Activated CD8-positive, alpha-beta memory T cell treated with anti-CD3 and anti-CD28 coated beads, Interleukin-2, amount 10 ng/mL, durations not matched to agents 7 days and 5 days (primary cell): ENCODE measurements at regions of chr5 and their contacts with region 1.

Region 1: DNA sequence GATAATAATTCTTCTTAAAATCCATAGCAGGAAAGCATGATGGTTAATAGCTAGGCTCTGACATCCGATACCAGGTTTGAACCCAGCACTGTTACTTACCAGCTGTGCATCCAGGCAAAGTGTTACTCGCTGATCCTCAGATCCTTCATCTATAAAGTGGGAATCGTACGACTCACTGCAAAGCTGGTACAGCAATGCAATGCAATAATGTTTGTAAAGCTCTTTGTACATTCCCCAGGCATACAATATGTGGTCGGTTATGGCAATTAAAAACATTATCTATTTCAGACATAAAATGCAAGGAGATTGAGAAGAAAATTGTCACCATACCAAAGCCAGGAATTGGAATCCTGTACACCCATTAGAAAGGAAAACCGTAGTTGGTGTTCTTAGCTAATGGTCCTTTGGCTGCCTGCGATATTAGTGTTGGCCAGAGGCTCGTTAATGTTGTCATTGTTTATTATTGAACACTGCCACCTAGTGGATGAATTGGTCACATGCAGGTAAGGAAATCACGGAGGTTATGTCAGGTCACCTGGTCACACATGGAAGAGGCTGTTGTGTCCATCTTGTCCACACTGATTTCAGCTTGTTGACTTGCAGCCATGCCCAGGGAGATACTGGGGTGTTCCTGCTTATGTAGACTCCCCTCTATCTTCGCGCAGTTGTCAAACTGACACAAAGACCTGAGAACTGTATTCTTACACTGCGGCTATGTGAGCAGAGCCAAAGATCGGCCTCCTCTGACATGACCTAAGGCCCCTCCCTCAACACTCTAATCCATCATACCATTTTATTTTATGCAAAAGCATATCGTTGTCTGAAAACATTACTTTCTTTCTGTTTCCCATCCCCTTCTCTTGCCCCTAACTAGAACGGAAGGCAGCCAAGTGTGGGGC is 87.5 kb upstream of the PPP2R2B start:
- DNase-seq: peak; percentile 60
- ATAC-seq: peak; percentile 83
- H3K4me3 Mint-ChIP-seq: no peak overlapping the region
- H3K27ac Mint-ChIP-seq: no peak overlapping the region
- H3K4me1 Mint-ChIP-seq: no peaks in the 10 kb centered on the region
- H3K27me3 Mint-ChIP-seq: peaks cover 2% of the 10 kb centered on the region

Region 2: GRCh38 chr5:146533260-146533857 is 432.7 kb before region 1 on chr5:
- CTCF ChIA-PET with region 1: interaction called, 85 read pairs
- DNase-seq: peak; percentile 86
- ATAC-seq: peak; percentile 91
- H3K4me3 Mint-ChIP-seq: no peak overlapping the region
- H3K27ac Mint-ChIP-seq: no peak overlapping the region
- H3K4me1 Mint-ChIP-seq: peaks cover 14% of the 10 kb centered on the region
- H3K27me3 Mint-ChIP-seq: peaks cover 3% of the 10 kb centered on the region

Region 3: GRCh38 chr5:146541958-146542849 is 423.8 kb before region 1 on chr5:
- CTCF ChIA-PET with region 1: interaction called, 73 read pairs
- DNase-seq: peak; percentile 79
- ATAC-seq: peak; percentile 94
- H3K4me3 Mint-ChIP-seq: no peak overlapping the region
- H3K27ac Mint-ChIP-seq: no peak overlapping the region
- H3K4me1 Mint-ChIP-seq: peaks cover 3% of the 10 kb centered on the region
- H3K27me3 Mint-ChIP-seq: peaks cover 5% of the 10 kb centered on the region

Region 4: GRCh38 chr5:146565764-146566367 is 400.1 kb before region 1 on chr5:
- CTCF ChIA-PET with region 1: interaction called, 34 read pairs
- DNase-seq: peak; percentile 73
- ATAC-seq: peak; percentile 99
- H3K4me3 Mint-ChIP-seq: no peak overlapping the region
- H3K27ac Mint-ChIP-seq: no peak overlapping the region
- H3K4me1 Mint-ChIP-seq: peaks cover 4% of the 10 kb centered on the region
- H3K27me3 Mint-ChIP-seq: peaks cover 3% of the 10 kb centered on the region

Region 5: DNA sequence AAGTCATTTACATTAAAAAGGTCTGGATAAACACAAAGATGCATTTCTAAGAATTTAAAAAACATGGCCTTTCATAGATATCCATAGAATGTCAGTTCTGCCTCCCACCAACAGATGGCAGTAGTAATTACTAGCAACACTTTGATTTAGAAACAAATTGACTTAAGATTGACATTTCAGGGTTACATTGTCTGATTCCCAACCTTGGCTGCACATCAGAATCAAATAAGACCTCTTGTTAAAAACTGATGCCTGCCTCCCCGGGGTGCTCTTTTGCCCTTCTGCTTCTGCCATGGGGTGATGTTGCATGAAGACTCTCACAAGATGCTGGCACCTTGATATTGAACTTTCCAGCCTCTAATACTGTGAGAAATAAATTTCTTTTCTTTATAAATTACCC is 303.8 kb before region 1 on chr5:
- CTCF ChIA-PET with region 1: interaction called, 13 read pairs
- DNase-seq: no peak
- ATAC-seq: no peak
- H3K4me3 Mint-ChIP-seq: no peak overlapping the region
- H3K27ac Mint-ChIP-seq: no peak overlapping the region
- H3K4me1 Mint-ChIP-seq: peaks cover 2% of the 10 kb centered on the region
- H3K27me3 Mint-ChIP-seq: no peaks in the 10 kb centered on the region

Region 6: DNA sequence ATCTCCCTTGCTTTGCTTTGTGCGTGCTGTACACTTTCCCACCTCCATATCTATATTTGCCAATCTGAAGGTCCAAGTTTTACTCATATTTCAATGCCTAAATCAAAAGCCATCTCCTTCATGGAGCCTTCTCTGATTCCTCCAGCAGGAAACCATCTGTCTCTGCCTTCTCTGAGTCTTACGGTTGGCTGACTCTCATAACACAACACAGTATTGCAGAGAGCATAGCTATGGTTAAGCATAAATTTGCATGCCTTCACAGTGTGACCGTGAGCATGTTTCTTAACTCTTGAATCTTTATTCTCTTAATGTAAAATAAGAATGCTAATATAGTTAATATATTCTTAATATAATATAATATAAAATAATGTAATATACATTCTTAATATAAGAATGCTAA is 49.4 kb after region 1 on chr5:
- CTCF ChIA-PET with region 1: no interaction called
- DNase-seq: no peak
- ATAC-seq: no peak
- H3K4me3 Mint-ChIP-seq: no peak overlapping the region
- H3K27ac Mint-ChIP-seq: no peak overlapping the region
- H3K4me1 Mint-ChIP-seq: no peaks in the 10 kb centered on the region
- H3K27me3 Mint-ChIP-seq: peaks cover 7% of the 10 kb centered on the region